ENCODE measurements at regions of chr15 and their contacts with region 1.

Region 1: GRCh38 chr15:35078221-35078915 is 6.7 kb downstream of the NANOGP8 start:
- DNase-seq: peak; percentile 44
- H3K4me3 ChIP-seq: no peak overlapping the region
- H3K27ac ChIP-seq: no peak overlapping the region
- H3K27me3 ChIP-seq: no peaks in the 10 kb centered on the region
- CTCF ChIP-seq: peak; percentile 83

Region 2: GRCh38 chr15:35089551-35089950 is 11.2 kb after region 1 on chr15:
- CTCF ChIA-PET with region 1: interaction called, 16 read pairs
- POLR2A ChIA-PET with region 1: no interaction called
- DNase-seq: no peak
- H3K4me3 ChIP-seq: no peak overlapping the region
- H3K27ac ChIP-seq: no peak overlapping the region
- H3K27me3 ChIP-seq: no peaks in the 10 kb centered on the region
- CTCF ChIP-seq: no peak

Region 3: GRCh38 chr15:35437157-35437556 is 358.8 kb after region 1 on chr15:
- CTCF ChIA-PET with region 1: no interaction called
- POLR2A ChIA-PET with region 1: no interaction called
- DNase-seq: no peak
- H3K4me3 ChIP-seq: no peak overlapping the region
- H3K27ac ChIP-seq: no peak overlapping the region
- H3K27me3 ChIP-seq: no peaks in the 10 kb centered on the region
- CTCF ChIP-seq: 0 out of 2 replicates have a peak, but pooled peaks have one; percentile 25

Region 4: GRCh38 chr15:35519541-35520149 is 441.3 kb after region 1 on chr15:
- CTCF ChIA-PET with region 1: interaction called, 10 read pairs
- POLR2A ChIA-PET with region 1: no interaction called
- DNase-seq: peak; percentile 18
- H3K4me3 ChIP-seq: no peak overlapping the region
- H3K27ac ChIP-seq: no peak overlapping the region
- H3K27me3 ChIP-seq: no peaks in the 10 kb centered on the region
- CTCF ChIP-seq: peak; percentile 70